Colonic mucosa (tissue), 4 donors: ENCODE measurements at regions of chr6 and their contacts with region 1.

Region 1: GRCh38 chr6:142146828-142147662 is at the starts of genes NMBR and VTA1:
- DNase-seq: peak; percentile 99
- H3K4me3 ChIP-seq: peak within 1 kb of the TSS; percentile 69
- H3K27ac ChIP-seq: peak within 1 kb of the TSS; percentile 42
- H3K4me1 ChIP-seq: peaks cover 11% of the 10 kb centered on the region
- H3K27me3 ChIP-seq: no peaks in the 10 kb centered on the region
- CTCF ChIP-seq: peak; percentile 72
- total RNA-seq, gene NMBR: not detected
- total RNA-seq, gene VTA1: 46.3 to 56.6 TPM

Region 2: GRCh38 chr6:142088858-142089216 is 58.2 kb before region 1 on chr6:
- intact Hi-C with region 1: no loop called
- DNase-seq: no peak
- H3K4me3 ChIP-seq: no peak overlapping the region
- H3K27ac ChIP-seq: no peak overlapping the region
- H3K4me1 ChIP-seq: no peaks in the 10 kb centered on the region
- H3K27me3 ChIP-seq: no peaks in the 10 kb centered on the region
- CTCF ChIP-seq: no peak

Region 3: DNA sequence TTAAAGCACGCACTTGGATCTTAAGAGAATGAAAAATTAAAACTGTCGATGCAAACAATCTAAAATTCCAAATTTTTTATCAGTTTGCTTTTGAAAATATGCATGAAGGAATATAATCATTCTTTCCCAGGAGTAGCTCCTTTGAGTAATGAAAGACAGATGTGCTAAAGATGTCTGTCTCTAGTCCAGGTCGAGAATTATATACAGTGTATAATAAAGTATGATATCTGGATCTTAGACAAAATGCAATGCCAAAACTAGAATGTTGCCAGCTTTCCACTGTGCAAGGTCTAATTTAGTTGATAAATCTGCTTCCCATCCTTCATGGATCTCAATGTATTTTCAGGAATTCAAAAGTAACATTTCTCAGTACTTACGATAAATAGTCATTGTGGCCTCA is 89.6 kb after region 1 on chr6:
- intact Hi-C with region 1: no loop called
- DNase-seq: no peak
- H3K4me3 ChIP-seq: no peak overlapping the region
- H3K27ac ChIP-seq: no peak overlapping the region
- H3K4me1 ChIP-seq: no peaks in the 10 kb centered on the region
- H3K27me3 ChIP-seq: no peaks in the 10 kb centered on the region
- CTCF ChIP-seq: no peak

Region 4: DNA sequence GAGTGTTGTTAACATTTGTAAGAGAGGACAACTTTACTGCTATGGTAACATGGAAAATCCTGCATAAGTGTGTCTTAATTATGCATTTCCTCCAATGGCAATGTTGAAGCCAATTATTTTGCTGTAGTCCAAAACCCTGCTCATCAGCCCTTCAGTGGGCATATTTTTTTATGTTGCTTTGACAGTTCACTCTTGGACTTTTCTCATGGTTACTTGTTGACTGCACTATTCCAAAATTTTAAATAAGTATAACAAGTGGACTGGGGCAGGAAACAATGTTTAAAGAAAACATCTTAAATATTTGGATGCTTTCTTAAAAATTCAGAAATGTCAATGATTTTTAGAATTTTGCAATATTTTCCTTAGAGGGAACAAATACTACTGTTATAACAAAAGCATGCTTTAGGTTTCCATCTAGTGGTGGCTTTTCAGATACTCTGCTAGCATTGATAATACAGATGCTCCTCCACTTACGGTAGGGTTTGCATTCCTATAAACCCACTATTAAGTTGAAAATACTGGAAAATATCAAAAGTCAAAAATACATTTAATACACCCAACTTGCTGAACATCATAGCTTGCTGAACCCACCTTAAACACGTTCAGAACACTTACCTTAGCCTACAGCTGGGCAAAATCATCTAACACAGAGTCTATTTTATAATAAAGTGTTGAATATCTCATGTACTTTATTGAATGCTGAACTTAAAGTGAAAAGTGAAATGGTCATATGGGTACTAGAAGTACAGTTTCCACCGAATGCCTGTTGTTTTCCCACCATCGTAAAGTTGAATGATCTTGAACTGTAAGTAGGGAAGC is 241.2 kb after region 1 on chr6:
- intact Hi-C with region 1: loop called (anchors 5 kb)
- DNase-seq: no peak
- H3K4me3 ChIP-seq: no peak overlapping the region
- H3K27ac ChIP-seq: no peak overlapping the region
- H3K4me1 ChIP-seq: no peaks in the 10 kb centered on the region
- H3K27me3 ChIP-seq: no peaks in the 10 kb centered on the region
- CTCF ChIP-seq: peak; percentile 49